Right cardiac atrium (tissue), 5 donors: ENCODE measurements at regions of chr16 and their contacts with region 1.

Region 1: DNA sequence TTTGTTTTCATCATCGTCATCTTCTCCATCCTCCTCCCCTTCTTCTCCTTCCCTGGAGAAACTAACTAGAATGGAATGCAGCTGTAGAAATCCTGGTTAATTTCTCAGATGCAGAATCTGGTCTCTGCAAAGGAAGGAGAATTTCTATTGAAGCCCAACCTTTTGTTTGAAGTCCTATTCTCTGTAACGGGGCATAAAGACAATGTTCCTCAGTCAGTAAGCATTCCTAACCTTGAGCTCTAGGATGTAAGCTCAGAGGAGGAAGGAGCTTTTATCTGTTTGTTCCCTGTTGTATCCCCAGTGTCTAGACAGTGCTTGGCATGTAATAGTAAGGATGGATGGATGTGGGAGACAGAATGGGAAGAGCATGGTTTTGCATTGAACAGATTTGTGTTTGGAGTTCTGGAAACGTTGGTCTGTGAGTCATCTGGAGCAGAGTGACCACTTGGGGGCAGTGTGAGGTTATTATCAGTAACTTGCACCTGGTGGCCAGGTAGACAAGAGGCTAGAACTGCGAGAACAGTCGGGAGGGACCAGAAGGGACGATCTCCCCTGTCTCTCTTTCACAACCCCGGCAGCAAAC is 363.7 kb downstream of the SNX29 start:
- DNase-seq: no peak
- ATAC-seq: no peak
- H3K4me3 ChIP-seq: no peak overlapping the region
- H3K27ac ChIP-seq: no peak overlapping the region
- H3K4me1 ChIP-seq: no peaks in the 10 kb centered on the region
- H3K27me3 ChIP-seq: no peaks in the 10 kb centered on the region

Region 2: DNA sequence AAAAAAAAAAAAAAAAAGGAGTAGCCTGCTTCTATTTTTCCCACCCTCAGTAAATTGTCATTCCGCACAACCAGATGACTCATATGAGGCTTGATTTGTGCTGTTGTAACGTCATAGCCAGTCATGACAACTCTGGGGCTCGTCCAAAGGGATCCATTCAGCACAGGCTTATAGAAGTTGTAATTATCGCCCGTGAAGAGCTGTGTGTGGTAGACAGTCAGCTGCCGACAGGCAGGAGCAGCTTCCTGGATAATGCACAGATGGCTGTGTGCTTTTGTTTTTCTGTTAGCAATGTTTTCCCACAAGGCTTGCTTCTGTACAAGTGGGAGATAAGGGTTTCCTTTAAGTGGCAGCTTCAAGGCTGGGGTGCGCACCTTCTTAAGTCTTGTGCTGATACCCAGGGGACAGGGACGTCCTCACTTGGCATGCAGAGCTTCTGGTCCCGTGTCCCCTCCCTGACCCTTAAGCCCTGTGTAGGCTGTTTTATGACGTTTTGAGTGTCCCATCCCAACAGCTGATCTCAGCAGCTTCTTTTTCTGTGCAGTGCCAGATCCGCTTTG is 337.7 kb before region 1 on chr16:
- intact Hi-C with region 1: no loop called
- DNase-seq: peak in 2 of 3 donors; percentile 26 to 51
- ATAC-seq: peak; percentile 60 to 92
- H3K4me3 ChIP-seq: peak overlapping the region; percentile 12
- H3K27ac ChIP-seq: no peak overlapping the region
- H3K4me1 ChIP-seq: no peaks in the 10 kb centered on the region
- H3K27me3 ChIP-seq: no peaks in the 10 kb centered on the region

Region 3: GRCh38 chr16:12803203-12804097 is 463.2 kb after region 1 on chr16 and contains the start of gene CPPED1:
- intact Hi-C with region 1: loop called in 1 of 4 experiments (anchors 10 kb)
- DNase-seq: peak; percentile 97 to 99 (median 98)
- ATAC-seq: peak; percentile 97 to 98
- H3K4me3 ChIP-seq: peak within 1 kb of the TSS; percentile 57
- H3K27ac ChIP-seq: peak within 1 kb of the TSS; percentile 74
- H3K4me1 ChIP-seq: no peaks in the 10 kb centered on the region
- H3K27me3 ChIP-seq: no peaks in the 10 kb centered on the region
- total RNA-seq, gene CPPED1: 8.4 to 13.0 (median 12.0) TPM